ENCODE measurements at regions of chr7 and their contacts with region 1.

Region 1: GRCh38 chr7:93374345-93374940 is 142.3 kb downstream of the VPS50 start:
- DNase-seq: peak; percentile 54
- H3K4me3 ChIP-seq: no peak overlapping the region
- H3K27ac ChIP-seq: no peak overlapping the region
- H3K4me1 ChIP-seq: no peaks in the 10 kb centered on the region
- H3K27me3 ChIP-seq: peaks cover 11 to 13% of the 10 kb centered on the region in 2 experiments
- CTCF ChIP-seq: peak; percentile 50 to 69
- POLR2A ChIP-seq: no peak

Region 2: GRCh38 chr7:93279541-93279940 is 94.9 kb before region 1 on chr7:
- CTCF ChIA-PET with region 1: interaction called, 16 read pairs
- POLR2A ChIA-PET with region 1: no interaction called
- dilution Hi-C with region 1: no loop called
- intact Hi-C with region 1: no loop called
- DNase-seq: peak; percentile 85
- H3K4me3 ChIP-seq: no peak overlapping the region
- H3K27ac ChIP-seq: peak overlapping the region; percentile 0
- H3K4me1 ChIP-seq: peaks cover 16% of the 10 kb centered on the region
- H3K27me3 ChIP-seq: no peaks in the 10 kb centered on the region
- CTCF ChIP-seq: no peak
- POLR2A ChIP-seq: no peak

Region 3: GRCh38 chr7:93359520-93360198 is 14.8 kb before region 1 on chr7:
- CTCF ChIA-PET with region 1: interaction called, 25 read pairs
- POLR2A ChIA-PET with region 1: no interaction called
- dilution Hi-C with region 1: no loop called
- intact Hi-C with region 1: no loop called
- DNase-seq: no peak
- H3K4me3 ChIP-seq: no peak overlapping the region
- H3K27ac ChIP-seq: no peak overlapping the region
- H3K4me1 ChIP-seq: no peaks in the 10 kb centered on the region
- H3K27me3 ChIP-seq: no peaks in the 10 kb centered on the region
- CTCF ChIP-seq: no peak
- POLR2A ChIP-seq: no peak